ENCODE measurements at regions of chr15 and their contacts with region 1.

Region 1: DNA sequence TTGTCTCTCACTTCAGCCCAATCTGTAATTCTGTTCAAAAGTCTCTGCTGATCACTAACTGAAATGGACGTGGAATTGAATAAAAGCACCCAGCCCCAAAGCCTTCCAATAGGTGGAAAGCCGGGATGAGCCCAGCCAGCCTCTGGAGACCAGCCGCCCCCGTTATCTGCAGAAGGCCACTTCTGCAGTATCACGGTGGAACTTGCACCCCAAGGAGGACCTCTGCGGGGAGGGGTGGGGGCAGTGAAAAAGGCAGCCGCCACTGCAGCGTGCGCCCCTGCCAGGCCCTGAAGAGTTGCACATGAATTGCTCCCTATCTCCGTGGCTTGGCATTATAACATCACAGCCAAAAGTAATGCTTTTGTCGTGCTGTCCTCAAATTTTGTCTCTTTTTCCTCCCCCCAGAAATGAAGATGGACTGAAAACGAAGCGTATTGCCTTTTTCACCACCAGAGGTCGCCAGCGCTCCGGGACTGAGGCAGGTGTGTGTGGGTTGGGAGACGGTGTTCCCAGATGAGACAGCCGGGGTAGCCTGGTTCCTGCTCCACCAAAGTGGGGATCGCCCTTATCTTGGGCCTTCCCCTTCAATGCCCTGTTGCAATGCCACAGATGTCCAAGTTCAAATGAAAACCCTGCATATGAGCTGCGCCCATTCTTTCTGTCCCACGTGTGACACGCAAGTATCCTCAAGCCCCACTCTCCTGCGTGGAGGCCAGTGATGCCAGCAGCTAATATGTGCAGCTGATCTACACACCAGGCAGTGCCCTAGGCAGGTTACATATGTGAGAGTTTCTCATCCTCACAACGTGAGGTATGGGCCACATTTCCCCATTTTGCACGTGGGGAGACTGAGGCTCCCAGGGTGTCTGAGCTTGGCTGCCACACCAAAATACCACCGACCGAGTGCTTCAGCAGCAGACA is 96.0 kb downstream of the LRRK1 start:
- DNase-seq: peak; percentile 59 to 76
- H3K4me3 ChIP-seq: no peak overlapping the region
- H3K4me3 Mint-ChIP-seq: no peak overlapping the region
- H3K27ac Mint-ChIP-seq: no peak overlapping the region
- H3K4me1 ChIP-seq: no peaks in the 10 kb centered on the region
- H3K4me1 Mint-ChIP-seq: no peaks in the 10 kb centered on the region
- H3K27me3 ChIP-seq: no peaks in the 10 kb centered on the region
- H3K27me3 Mint-ChIP-seq: no peaks in the 10 kb centered on the region
- CTCF ChIP-seq: peak; percentile 83 to 88

Region 2: DNA sequence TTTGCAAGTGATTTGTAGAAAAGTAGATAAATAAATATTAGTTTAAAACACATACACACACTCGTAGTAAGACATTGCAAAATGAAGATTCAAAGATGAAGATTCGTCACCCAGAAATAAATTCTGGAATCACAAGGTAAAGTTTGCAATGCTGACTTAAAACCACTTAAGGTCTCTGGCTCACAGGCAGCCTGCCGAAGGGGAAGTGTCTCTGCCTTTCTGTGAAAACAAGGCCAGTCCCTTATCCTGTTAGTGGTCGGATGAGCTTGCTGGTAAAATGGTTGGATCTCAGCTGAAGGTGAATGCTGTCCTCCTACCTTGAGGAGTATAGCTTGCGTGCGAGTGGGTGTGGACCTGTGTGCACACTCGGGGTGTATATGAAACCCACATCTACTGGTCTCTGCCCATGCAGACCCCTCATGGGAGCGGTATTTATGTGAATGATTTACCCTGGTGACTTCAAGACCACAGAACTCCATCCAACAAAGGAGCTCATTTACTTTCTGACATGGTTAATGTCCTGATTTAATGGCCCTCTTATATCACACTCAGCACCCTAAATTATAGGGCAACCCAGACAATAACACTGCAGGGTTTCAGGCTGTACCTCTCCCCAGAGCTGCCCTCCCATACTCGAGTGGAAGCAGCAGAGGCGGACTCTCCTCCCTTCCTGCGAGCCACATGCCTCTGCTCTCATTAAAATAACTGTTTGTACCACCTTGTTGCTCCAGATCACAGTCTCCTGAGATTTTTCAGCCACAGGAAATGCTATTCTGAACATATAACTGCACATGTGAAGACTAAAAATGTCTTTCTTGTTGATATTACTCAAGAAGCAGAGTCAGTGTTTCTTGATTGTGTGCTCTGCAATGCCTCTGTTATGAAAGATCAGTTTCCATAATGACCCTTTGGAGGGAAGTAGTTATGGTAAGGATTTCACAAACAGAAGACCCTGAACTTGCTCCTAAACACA is 181.5 kb before region 1 on chr15:
- CTCF ChIA-PET with region 1: no interaction called
- POLR2A ChIA-PET with region 1: no interaction called
- intact Hi-C with region 1: no loop called
- DNase-seq: no peak
- H3K4me3 ChIP-seq: no peak overlapping the region
- H3K4me3 Mint-ChIP-seq: no peak overlapping the region
- H3K27ac Mint-ChIP-seq: no peak overlapping the region
- H3K4me1 ChIP-seq: no peaks in the 10 kb centered on the region
- H3K4me1 Mint-ChIP-seq: no peaks in the 10 kb centered on the region
- H3K27me3 ChIP-seq: no peaks in the 10 kb centered on the region
- H3K27me3 Mint-ChIP-seq: no peaks in the 10 kb centered on the region
- CTCF ChIP-seq: no peak

Region 3: DNA sequence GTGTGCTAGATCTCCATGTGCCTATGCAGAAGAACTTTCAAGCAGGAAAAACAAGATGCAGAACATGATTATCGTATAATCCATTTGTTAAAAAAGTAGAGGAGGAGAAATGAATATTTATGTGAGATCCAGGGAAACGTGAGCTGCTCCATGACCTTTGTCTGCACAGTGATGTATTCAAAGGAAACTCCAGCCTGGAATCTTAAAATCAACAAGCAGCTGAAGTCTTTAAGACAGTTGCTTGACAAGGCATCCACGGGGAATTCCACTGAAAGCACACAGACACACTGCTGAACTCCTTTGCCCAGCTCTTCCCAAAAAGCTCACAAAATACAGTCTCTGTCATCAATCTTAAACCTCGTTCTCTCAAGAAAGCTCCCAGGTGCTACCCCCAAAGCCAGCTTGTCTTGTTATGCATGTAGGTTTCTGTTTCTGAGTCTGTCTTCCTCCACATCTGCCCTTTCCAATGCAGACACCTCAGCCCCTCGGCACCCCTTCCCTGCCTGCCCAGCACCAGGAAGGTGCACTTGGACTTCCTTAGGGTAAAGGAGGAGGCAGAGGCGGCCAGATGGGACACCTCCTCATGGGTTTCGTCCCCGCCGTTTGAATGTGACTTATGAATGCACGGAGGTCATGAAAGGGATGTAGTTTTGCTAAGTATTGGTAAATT is 67.3 kb before region 1 on chr15:
- CTCF ChIA-PET with region 1: no interaction called
- POLR2A ChIA-PET with region 1: no interaction called
- intact Hi-C with region 1: no loop called
- DNase-seq: no peak
- H3K4me3 ChIP-seq: no peak overlapping the region
- H3K4me3 Mint-ChIP-seq: peak overlapping the region; percentile 10
- H3K27ac Mint-ChIP-seq: no peak overlapping the region
- H3K4me1 ChIP-seq: peaks cover 6% of the 10 kb centered on the region; the same call in 1 of the 2 replicates
- H3K4me1 Mint-ChIP-seq: peaks cover 16% of the 10 kb centered on the region
- H3K27me3 ChIP-seq: no peaks in the 10 kb centered on the region
- H3K27me3 Mint-ChIP-seq: no peaks in the 10 kb centered on the region
- CTCF ChIP-seq: no peak

Region 4: GRCh38 chr15:100997442-100997841 is 17.7 kb before region 1 on chr15:
- CTCF ChIA-PET with region 1: no interaction called
- POLR2A ChIA-PET with region 1: no interaction called
- intact Hi-C with region 1: no loop called
- DNase-seq: no peak
- H3K4me3 ChIP-seq: no peak overlapping the region
- H3K4me3 Mint-ChIP-seq: no peak overlapping the region
- H3K27ac Mint-ChIP-seq: no peak overlapping the region
- H3K4me1 ChIP-seq: no peaks in the 10 kb centered on the region
- H3K4me1 Mint-ChIP-seq: peaks cover 7% of the 10 kb centered on the region
- H3K27me3 ChIP-seq: no peaks in the 10 kb centered on the region
- H3K27me3 Mint-ChIP-seq: no peaks in the 10 kb centered on the region
- CTCF ChIP-seq: no peak

Region 5: DNA sequence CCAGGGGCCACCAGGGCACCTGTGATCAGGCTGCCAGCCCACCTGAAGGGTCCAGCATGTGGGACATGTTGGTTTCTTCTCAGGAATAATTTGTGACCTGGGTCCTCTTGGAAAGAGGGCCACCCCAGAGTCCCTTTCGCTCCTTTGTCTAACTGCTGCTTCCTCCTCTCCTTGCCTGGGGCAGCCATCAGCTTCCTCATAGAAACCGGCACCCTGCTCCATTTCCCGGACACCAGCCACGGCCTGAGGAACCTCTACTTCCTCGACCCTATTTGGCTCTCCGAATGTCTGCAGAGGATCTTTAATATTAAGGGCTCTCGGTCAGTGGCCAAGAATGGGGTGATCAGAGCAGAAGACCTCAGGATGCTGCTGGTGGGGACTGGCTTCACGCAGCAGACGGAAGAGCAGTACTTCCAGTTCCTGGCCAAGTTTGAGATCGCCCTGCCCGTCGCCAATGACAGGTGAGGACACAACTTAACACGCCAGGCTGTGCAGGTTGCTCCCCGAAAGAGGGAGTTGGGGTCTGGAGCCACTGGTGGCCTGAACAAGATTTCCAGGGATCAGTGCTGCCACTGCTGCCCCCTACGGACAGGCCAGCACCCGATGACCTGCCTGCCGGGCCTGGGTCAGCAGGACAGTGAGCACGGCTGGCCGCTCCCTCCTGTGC is 13.7 kb after region 1 on chr15:
- CTCF ChIA-PET with region 1: no interaction called
- POLR2A ChIA-PET with region 1: no interaction called
- intact Hi-C with region 1: loop called (anchors 1 kb)
- DNase-seq: no peak
- H3K4me3 ChIP-seq: no peak overlapping the region
- H3K4me3 Mint-ChIP-seq: no peak overlapping the region
- H3K27ac Mint-ChIP-seq: no peak overlapping the region
- H3K4me1 ChIP-seq: no peaks in the 10 kb centered on the region
- H3K4me1 Mint-ChIP-seq: no peaks in the 10 kb centered on the region
- H3K27me3 ChIP-seq: no peaks in the 10 kb centered on the region
- H3K27me3 Mint-ChIP-seq: no peaks in the 10 kb centered on the region
- CTCF ChIP-seq: no peak

Region 6: GRCh38 chr15:101258238-101259144 is 243.3 kb after region 1 on chr15:
- CTCF ChIA-PET with region 1: interaction called, 6 read pairs
- POLR2A ChIA-PET with region 1: no interaction called
- intact Hi-C with region 1: loop called (anchors 1 kb)
- DNase-seq: peak in 1 of 2 experiments; percentile 64
- H3K4me3 ChIP-seq: no peak overlapping the region
- H3K4me3 Mint-ChIP-seq: no peak overlapping the region
- H3K27ac Mint-ChIP-seq: no peak overlapping the region
- H3K4me1 ChIP-seq: no peaks in the 10 kb centered on the region
- H3K4me1 Mint-ChIP-seq: no peaks in the 10 kb centered on the region
- H3K27me3 ChIP-seq: no peaks in the 10 kb centered on the region
- H3K27me3 Mint-ChIP-seq: peaks cover 2% of the 10 kb centered on the region
- CTCF ChIP-seq: peak; percentile 70 to 84